PC-9 (cell line): ENCODE measurements at regions of chr15 and their contacts with region 1.

Region 1: DNA sequence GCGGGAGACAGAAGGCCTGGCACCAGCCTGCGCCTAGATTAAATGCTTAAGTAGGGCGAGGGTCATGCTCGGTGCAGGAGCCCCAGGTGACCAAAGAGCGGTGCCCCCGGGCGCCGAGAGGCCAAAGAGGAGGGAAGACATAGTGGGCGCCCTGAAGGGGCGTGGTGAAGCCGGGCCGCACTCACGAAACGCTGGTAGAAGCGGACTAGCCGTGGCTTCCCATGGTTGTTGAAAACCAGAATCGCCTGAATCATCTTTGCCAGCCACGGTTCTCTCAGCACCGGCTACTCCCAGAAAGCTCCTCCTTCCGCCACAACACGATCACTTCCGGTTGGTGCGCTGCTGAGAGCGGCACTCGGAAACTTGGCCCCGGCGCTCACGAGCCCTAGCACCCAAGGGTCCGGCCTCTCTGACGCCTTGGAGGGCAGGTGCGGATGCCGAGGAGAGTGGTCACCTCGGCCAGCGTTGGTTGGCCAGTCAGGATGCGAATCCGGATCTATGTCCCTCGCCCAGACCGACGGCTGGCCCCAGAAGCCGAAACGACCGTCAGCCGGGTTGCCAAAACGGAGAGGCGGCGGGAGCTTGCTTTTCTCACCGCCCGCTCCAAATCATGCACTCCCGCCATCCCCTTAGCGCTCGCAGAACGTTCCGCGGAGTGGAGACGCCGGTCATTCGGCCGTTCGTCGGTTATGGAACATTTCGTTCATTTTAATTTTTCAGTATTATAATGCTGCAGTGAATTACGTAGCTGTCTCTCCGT is at the start of gene AP3S2:
- DNase-seq: peak; percentile 87 to 94
- H3K4me3 ChIP-seq: peak within 1 kb of the TSS; percentile 87
- H3K27ac ChIP-seq: peak within 1 kb of the TSS; percentile 97
- H3K4me1 ChIP-seq: peaks cover 35% of the 10 kb centered on the region
- H3K27me3 ChIP-seq: no peaks in the 10 kb centered on the region
- CTCF ChIP-seq: no peak
- total RNA-seq, gene AP3S2: 49.3 and 57.6 TPM in 2 replicates

Region 2: DNA sequence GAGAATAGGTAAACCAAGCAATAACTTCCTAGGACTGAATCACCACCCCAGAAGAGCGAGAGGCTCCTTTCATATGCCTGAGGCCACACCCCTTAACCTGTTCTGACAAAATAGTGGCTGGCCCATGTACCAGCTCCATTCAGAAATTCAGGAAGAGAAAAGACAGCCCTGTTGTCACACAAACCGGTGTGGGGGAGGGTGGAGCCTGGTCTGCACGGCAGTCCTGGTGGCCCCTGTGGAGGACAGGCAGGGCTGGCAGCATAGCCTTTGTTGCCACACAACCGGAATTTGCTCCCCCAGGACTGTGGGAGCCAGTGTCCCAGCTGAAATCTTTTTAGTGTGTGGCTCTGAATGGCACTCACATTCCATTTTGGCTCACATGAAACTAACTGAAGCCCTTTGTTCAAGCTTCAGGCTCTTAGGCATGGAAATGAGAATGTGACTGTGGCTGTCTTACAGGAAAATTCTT is 696.3 kb before region 1 on chr15:
- CTCF ChIA-PET with region 1: no interaction called
- POLR2A ChIA-PET with region 1: no interaction called
- intact Hi-C with region 1: no loop called
- DNase-seq: peak in 1 of 2 experiments; percentile 24
- H3K4me3 ChIP-seq: no peak overlapping the region
- H3K27ac ChIP-seq: no peak overlapping the region
- H3K4me1 ChIP-seq: no peaks in the 10 kb centered on the region
- H3K27me3 ChIP-seq: no peaks in the 10 kb centered on the region
- CTCF ChIP-seq: no peak

Region 3: GRCh38 chr15:89575146-89575655 is 318.7 kb before region 1 on chr15 and contains the start of gene TICRR:
- CTCF ChIA-PET with region 1: no interaction called
- POLR2A ChIA-PET with region 1: interaction called, 23 read pairs
- intact Hi-C with region 1: no loop called
- DNase-seq: peak; percentile 96 to 99
- H3K4me3 ChIP-seq: peak within 1 kb of the TSS; percentile 71
- H3K27ac ChIP-seq: peak within 1 kb of the TSS; percentile 59
- H3K4me1 ChIP-seq: peaks cover 24% of the 10 kb centered on the region
- H3K27me3 ChIP-seq: no peaks in the 10 kb centered on the region
- CTCF ChIP-seq: no peak
- total RNA-seq, gene TICRR: 17.8 and 23.6 TPM in 2 replicates

Region 4: GRCh38 chr15:89781891-89782618 is 111.8 kb before region 1 on chr15:
- CTCF ChIA-PET with region 1: no interaction called
- POLR2A ChIA-PET with region 1: no interaction called
- intact Hi-C with region 1: no loop called
- DNase-seq: peak; percentile 91 to 96
- H3K4me3 ChIP-seq: no peak overlapping the region
- H3K27ac ChIP-seq: peak overlapping the region; percentile 96
- H3K4me1 ChIP-seq: peaks cover 76% of the 10 kb centered on the region
- H3K27me3 ChIP-seq: no peaks in the 10 kb centered on the region
- CTCF ChIP-seq: no peak

Region 5: DNA sequence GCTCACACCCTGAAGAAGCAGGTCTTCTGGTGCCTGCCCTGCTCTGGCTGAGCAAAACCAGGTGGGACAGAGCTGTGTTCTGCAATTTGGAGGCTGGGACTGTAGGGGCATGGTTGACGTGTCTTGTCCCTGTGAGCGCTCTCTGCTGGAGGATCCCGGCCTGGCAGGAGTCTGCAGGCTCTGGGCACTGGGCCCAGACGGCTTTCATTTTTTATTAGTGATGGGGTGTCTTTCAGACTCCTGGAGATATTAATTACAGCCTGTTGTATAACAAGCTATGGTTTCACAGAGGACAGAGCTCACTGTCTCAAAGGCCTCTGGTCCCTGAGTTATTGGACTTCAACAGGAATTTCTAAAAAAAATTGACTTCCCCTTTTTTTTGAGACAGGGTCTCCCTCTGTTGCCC is 77.7 kb after region 1 on chr15:
- CTCF ChIA-PET with region 1: interaction called, 6 read pairs
- POLR2A ChIA-PET with region 1: no interaction called
- intact Hi-C with region 1: loop called (anchors 1 kb)
- DNase-seq: peak in 1 of 2 experiments; percentile 57
- H3K4me3 ChIP-seq: no peak overlapping the region
- H3K27ac ChIP-seq: no peak overlapping the region
- H3K4me1 ChIP-seq: no peaks in the 10 kb centered on the region
- H3K27me3 ChIP-seq: no peaks in the 10 kb centered on the region
- CTCF ChIP-seq: peak; percentile 54

Region 6: GRCh38 chr15:90086868-90087268 is 193.0 kb after region 1 on chr15:
- CTCF ChIA-PET with region 1: no interaction called
- POLR2A ChIA-PET with region 1: no interaction called
- intact Hi-C with region 1: loop called (anchors 1 kb)
- DNase-seq: peak in 1 of 2 experiments; percentile 47
- H3K4me3 ChIP-seq: no peak overlapping the region
- H3K27ac ChIP-seq: no peak overlapping the region
- H3K4me1 ChIP-seq: no peaks in the 10 kb centered on the region
- H3K27me3 ChIP-seq: no peaks in the 10 kb centered on the region
- CTCF ChIP-seq: peak; percentile 84

Region 7: GRCh38 chr15:90233376-90234095 is 339.7 kb after region 1 on chr15 and contains the start of gene CIB1:
- CTCF ChIA-PET with region 1: no interaction called
- POLR2A ChIA-PET with region 1: no interaction called
- intact Hi-C with region 1: loop called (anchors 5 kb)
- DNase-seq: peak; percentile 87 to 98
- H3K4me3 ChIP-seq: peak within 1 kb of the TSS; percentile 86
- H3K27ac ChIP-seq: peak within 1 kb of the TSS; percentile 74
- H3K4me1 ChIP-seq: peaks cover 57% of the 10 kb centered on the region
- H3K27me3 ChIP-seq: no peaks in the 10 kb centered on the region
- CTCF ChIP-seq: peak; percentile 64; the same call in 1 of the 2 replicates
- total RNA-seq, gene CIB1: 113 and 127 TPM in 2 replicates

Region 8: GRCh38 chr15:90286678-90287077 is 392.8 kb after region 1 on chr15:
- CTCF ChIA-PET with region 1: interaction called, 7 read pairs
- POLR2A ChIA-PET with region 1: interaction called, 3 read pairs
- intact Hi-C with region 1: loop called (anchors 5 kb)
- DNase-seq: peak; percentile 35 to 39
- H3K4me3 ChIP-seq: no peak overlapping the region
- H3K27ac ChIP-seq: no peak overlapping the region
- H3K4me1 ChIP-seq: no peaks in the 10 kb centered on the region
- H3K27me3 ChIP-seq: no peaks in the 10 kb centered on the region
- CTCF ChIP-seq: peak; percentile 66